B cell (primary cell): ENCODE measurements at regions of chr7 and their contacts with region 1.

Region 1: DNA sequence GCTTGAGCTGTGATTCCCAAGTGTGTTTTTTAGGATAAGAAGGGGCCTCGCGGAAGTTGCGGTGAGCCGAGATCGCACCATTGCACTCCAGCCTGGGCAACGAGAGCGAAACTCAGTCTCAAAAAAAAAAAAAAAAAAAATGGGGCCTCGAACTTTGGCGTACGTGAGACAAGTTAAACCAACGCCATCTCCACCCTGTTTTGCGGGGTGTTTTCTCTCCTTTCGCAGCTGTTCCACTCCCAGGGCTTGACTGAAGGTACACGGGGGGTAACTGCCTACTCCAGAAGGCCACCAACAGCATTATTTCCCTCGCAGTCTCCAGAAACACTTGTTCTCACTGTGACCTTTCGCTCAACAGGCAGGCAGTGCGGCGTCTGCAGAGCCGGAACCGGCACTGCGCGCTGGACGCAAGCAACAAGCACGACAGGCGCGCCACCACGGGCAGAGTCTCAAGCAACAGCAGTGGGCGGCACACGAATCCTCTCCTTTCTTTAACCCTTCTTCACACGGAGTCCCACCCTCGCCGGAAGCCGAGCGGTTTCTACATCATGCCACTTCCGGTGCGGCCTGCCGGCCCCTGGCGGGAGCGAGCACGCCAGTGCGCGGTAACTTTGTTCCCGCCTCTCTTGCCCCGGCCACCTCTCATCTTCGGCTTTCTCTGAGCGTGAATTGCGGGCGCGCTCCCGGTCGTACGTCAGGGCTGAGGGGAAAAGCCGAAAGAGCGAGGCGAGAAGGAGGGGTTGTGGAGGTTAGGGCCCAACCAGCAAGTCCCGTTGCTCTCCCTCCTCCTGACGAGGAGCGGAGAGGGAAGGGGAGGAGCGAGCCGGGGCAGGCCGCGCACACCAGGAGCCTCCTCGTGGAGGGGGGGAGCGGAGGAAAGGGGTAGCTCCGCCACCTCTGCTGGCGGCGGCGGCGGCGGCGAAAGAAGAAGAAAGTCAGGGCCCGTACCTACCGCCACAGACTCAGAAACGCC is 814 bp upstream of the CDK13 start:
- DNase-seq: peak; percentile 99
- ATAC-seq: peak; percentile 70
- H3K4me3 ChIP-seq: peak overlapping the region; percentile 77 to 98 (median 91)
- H3K4me3 Mint-ChIP-seq: peak overlapping the region; percentile 94
- H3K27ac ChIP-seq: peak overlapping the region; percentile 98
- H3K27ac Mint-ChIP-seq: peak overlapping the region; percentile 99
- H3K4me1 ChIP-seq: peaks cover 18 to 26% of the 10 kb centered on the region in 2 donors
- H3K4me1 Mint-ChIP-seq: peaks cover 38% of the 10 kb centered on the region
- H3K27me3 ChIP-seq: no peaks in the 10 kb centered on the region
- H3K27me3 Mint-ChIP-seq: no peaks in the 10 kb centered on the region
- CTCF ChIP-seq: no peak

Region 2: GRCh38 chr7:38178004-38178694 is 1771.1 kb before region 1 on chr7 and contains the start of gene STARD3NL:
- CTCF ChIA-PET with region 1: no interaction called
- POLR2A ChIA-PET with region 1: no interaction called
- intact Hi-C with region 1: loop called (anchors 5 kb)
- DNase-seq: peak; percentile 98
- ATAC-seq: peak; percentile 95
- H3K4me3 ChIP-seq: peak within 1 kb of the TSS; percentile 36 to 98 (median 91)
- H3K4me3 Mint-ChIP-seq: peak within 1 kb of the TSS; percentile 97
- H3K27ac ChIP-seq: peak within 1 kb of the TSS; percentile 81 to 93
- H3K27ac Mint-ChIP-seq: peak within 1 kb of the TSS; percentile 95
- H3K4me1 ChIP-seq: peaks cover 16 to 17% of the 10 kb centered on the region in 2 donors
- H3K4me1 Mint-ChIP-seq: peaks cover 33% of the 10 kb centered on the region
- H3K27me3 ChIP-seq: no peaks in the 10 kb centered on the region
- H3K27me3 Mint-ChIP-seq: no peaks in the 10 kb centered on the region
- CTCF ChIP-seq: no peak
- total RNA-seq, gene STARD3NL: 13.4 and 14.2 TPM in 2 replicates

Region 3: DNA sequence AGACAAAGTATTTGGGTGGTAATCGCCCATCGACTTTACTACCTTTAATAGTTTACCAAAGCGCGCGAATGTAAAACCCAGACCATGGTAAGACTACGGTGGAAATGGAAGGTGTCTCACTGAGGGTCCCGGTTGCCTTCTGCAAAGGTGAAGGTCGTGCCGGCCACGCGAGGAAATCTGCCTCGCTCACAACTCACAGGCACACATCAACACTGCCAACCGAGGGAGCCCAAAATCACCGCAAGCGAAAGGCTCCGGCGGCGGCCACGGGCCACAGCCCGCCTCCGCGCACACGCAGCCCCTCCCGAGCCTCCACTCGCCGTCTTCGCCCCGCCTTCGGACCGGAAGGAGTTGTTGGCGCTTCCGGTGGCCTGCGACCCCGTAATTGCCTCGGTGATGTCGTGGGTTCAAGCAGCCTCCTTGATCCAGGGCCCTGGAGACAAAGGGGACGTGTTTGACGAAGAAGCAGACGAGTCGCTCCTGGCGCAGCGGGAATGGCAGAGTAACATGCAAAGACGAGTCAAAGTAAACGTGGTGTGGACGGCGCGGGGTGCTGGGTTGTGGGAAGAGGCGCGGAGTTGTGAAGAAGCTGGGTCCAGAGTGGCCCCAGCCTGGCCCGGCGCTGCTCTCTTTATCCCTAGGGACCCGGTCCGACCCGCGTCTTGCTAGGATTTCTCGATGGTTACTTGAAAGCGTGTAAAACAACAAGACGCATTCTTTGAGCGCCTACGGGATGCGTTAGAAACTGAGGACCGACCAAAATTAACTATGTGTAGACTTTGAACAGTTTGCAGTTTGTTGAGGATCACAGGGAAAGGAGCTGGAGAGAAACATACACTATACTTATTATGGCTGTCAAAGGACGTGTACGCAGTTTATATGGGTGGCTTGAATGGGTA is 383.0 kb before region 1 on chr7 and contains the start of gene YAE1:
- CTCF ChIA-PET with region 1: no interaction called
- POLR2A ChIA-PET with region 1: no interaction called
- intact Hi-C with region 1: loop called (anchors 5 kb)
- DNase-seq: peak; percentile 86
- ATAC-seq: peak; percentile 96
- H3K4me3 ChIP-seq: peak within 1 kb of the TSS; percentile 72 to 90 (median 89)
- H3K4me3 Mint-ChIP-seq: peak within 1 kb of the TSS; percentile 100
- H3K27ac ChIP-seq: peak within 1 kb of the TSS; percentile 65 to 79
- H3K27ac Mint-ChIP-seq: peak within 1 kb of the TSS; percentile 96
- H3K4me1 ChIP-seq: peaks cover 10 to 12% of the 10 kb centered on the region in 2 donors
- H3K4me1 Mint-ChIP-seq: peaks cover 21% of the 10 kb centered on the region
- H3K27me3 ChIP-seq: no peaks in the 10 kb centered on the region
- H3K27me3 Mint-ChIP-seq: peaks cover 1% of the 10 kb centered on the region
- CTCF ChIP-seq: no peak
- total RNA-seq, gene YAE1: 20.0 and 22.9 TPM in 2 replicates

Region 4: DNA sequence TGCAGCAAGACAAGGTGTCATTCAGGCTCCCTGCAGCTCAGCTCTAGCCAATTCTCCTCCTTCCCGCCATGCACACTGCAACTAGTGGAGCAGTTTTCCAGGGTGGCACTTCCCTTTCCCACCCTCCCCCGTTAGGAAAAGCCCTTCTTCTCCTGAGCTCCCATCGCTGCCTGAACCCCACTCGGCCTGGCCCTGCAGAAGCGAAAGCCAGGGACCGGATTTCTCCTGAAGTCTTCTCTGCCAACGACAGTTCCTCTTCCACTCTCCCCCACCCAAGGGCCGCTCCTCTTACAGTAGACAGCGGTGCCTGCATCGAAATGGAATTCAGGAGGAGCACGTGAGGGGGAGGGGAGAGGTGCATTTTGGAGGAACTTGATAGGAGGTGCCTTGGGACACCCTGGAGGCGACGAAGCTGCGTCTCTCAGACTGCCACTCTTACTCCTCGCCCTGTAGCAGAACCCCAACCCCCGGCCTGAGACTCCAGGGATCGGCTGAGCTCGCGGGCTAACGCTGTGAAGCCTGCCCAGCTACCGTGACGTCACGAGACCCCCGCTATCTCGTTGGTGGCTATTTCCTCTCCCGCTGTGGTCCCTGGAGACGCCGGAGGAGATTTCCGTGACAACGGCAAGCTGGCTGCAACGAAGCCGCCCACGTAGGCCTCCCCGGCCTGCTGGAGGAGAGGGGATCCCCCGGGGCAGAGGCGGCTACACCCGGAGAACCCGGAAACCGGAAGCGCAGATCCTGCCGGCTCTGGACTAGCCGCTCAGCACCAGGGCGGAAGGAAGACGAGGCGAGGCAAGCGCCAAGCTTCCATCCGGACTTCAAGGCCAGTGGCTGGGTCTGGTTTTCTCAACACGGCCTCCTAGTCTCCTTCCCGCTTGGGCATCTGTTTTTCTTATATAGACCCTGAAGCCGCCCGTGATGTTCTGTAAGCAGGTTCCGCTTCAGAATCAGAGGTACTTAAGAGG is 216.1 kb before region 1 on chr7:
- CTCF ChIA-PET with region 1: no interaction called
- POLR2A ChIA-PET with region 1: no interaction called
- intact Hi-C with region 1: loop called (anchors 1 kb)
- DNase-seq: peak; percentile 99
- ATAC-seq: peak; percentile 94
- H3K4me3 ChIP-seq: peak overlapping the region; percentile 17 to 90 (median 75)
- H3K4me3 Mint-ChIP-seq: peak overlapping the region; percentile 89
- H3K27ac ChIP-seq: peak overlapping the region; percentile 82 to 86
- H3K27ac Mint-ChIP-seq: peak overlapping the region; percentile 94
- H3K4me1 ChIP-seq: peaks cover 33 to 45% of the 10 kb centered on the region in 2 donors
- H3K4me1 Mint-ChIP-seq: peaks cover 47% of the 10 kb centered on the region
- H3K27me3 ChIP-seq: no peaks in the 10 kb centered on the region
- H3K27me3 Mint-ChIP-seq: no peaks in the 10 kb centered on the region
- CTCF ChIP-seq: no peak

Region 5: DNA sequence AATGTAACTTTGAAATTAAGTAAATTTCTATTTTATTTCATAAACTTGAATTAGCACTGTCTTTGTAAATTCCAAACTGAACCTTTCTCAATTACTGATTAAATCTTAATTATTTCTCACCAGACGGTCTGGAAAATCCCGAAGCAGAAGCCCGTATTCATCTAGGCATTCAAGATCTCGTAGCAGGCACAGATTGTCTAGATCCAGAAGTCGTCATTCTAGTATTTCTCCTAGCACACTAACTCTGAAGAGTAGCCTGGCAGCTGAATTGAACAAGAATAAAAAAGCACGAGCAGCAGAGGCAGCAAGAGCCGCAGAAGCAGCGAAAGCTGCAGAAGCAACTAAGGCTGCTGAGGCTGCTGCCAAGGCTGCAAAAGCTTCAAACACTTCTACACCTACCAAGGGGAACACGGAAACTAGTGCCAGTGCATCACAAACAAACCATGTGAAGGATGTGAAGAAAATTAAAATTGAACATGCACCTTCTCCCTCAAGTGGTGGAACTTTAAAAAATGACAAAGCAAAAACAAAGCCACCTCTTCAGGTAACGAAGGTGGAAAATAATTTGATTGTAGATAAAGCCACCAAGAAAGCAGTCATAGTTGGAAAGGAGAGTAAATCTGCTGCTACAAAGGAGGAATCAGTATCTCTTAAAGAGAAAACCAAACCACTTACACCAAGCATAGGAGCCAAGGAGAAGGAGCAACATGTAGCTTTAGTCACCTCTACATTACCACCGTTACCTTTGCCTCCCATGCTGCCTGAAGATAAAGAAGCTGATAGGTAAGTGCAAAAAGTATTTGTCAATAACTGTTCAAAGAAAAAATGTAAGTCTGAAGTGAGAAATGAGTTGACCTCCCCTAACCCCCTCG is 38.5 kb after region 1 on chr7:
- CTCF ChIA-PET with region 1: interaction called, 4 read pairs
- POLR2A ChIA-PET with region 1: no interaction called
- intact Hi-C with region 1: loop called (anchors 5 kb)
- DNase-seq: no peak
- ATAC-seq: no peak
- H3K4me3 ChIP-seq: no peak overlapping the region
- H3K4me3 Mint-ChIP-seq: no peak overlapping the region
- H3K27ac ChIP-seq: no peak overlapping the region
- H3K27ac Mint-ChIP-seq: no peak overlapping the region
- H3K4me1 ChIP-seq: peaks cover 14 to 18% of the 10 kb centered on the region in 2 donors
- H3K4me1 Mint-ChIP-seq: peaks cover 49% of the 10 kb centered on the region
- H3K27me3 ChIP-seq: no peaks in the 10 kb centered on the region
- H3K27me3 Mint-ChIP-seq: no peaks in the 10 kb centered on the region
- CTCF ChIP-seq: no peak

Region 6: GRCh38 chr7:40057292-40057691 is 108.0 kb after region 1 on chr7:
- CTCF ChIA-PET with region 1: interaction called, 121 read pairs
- POLR2A ChIA-PET with region 1: interaction called, 8 read pairs
- intact Hi-C with region 1: loop called (anchors 1 kb)
- DNase-seq: no peak
- ATAC-seq: no peak
- H3K4me3 ChIP-seq: no peak overlapping the region
- H3K4me3 Mint-ChIP-seq: no peak overlapping the region
- H3K27ac ChIP-seq: no peak overlapping the region
- H3K27ac Mint-ChIP-seq: no peak overlapping the region
- H3K4me1 ChIP-seq: no peaks in the 10 kb centered on the region
- H3K4me1 Mint-ChIP-seq: no peaks in the 10 kb centered on the region
- H3K27me3 ChIP-seq: no peaks in the 10 kb centered on the region
- H3K27me3 Mint-ChIP-seq: no peaks in the 10 kb centered on the region
- CTCF ChIP-seq: no peak

Region 7: GRCh38 chr7:41881331-41882130 is 1932.3 kb after region 1 on chr7:
- CTCF ChIA-PET with region 1: no interaction called
- POLR2A ChIA-PET with region 1: no interaction called
- intact Hi-C with region 1: loop called (anchors 2 kb)
- DNase-seq: peak; percentile 96
- ATAC-seq: peak; percentile 89
- H3K4me3 ChIP-seq: peak overlapping the region in 1 of 5 experiments; percentile 41
- H3K4me3 Mint-ChIP-seq: peak overlapping the region; percentile 84
- H3K27ac ChIP-seq: peak overlapping the region; percentile 87 to 91
- H3K27ac Mint-ChIP-seq: peak overlapping the region; percentile 93
- H3K4me1 ChIP-seq: peaks cover 57 to 63% of the 10 kb centered on the region in 2 donors
- H3K4me1 Mint-ChIP-seq: peaks cover 71% of the 10 kb centered on the region
- H3K27me3 ChIP-seq: no peaks in the 10 kb centered on the region
- H3K27me3 Mint-ChIP-seq: no peaks in the 10 kb centered on the region
- CTCF ChIP-seq: no peak